K562 (cell line): ENCODE measurements at regions of chr2 and their contacts with region 1.

Region 1: GRCh38 chr2:37671009-37671815 is at the start of gene CDC42EP3:
- DNase-seq: peak; percentile 62 to 88 (median 80)
- ATAC-seq: peak; percentile 89
- H3K4me3 ChIP-seq: peak within 1 kb of the TSS; percentile 67
- H3K27ac ChIP-seq: peak within 1 kb of the TSS; percentile 33; the same call in 2 of the 3 replicates
- H3K4me1 ChIP-seq: peaks cover 13 to 22% of the 10 kb centered on the region in 2 experiments; a peak in 4 of 5 replicates
- H3K27me3 ChIP-seq: peaks cover 0 to 12% of the 10 kb centered on the region in 2 experiments; a peak in 2 of 5 replicates
- CTCF ChIP-seq: no peak
- EP300 ChIP-seq: no peak
- POLR2A ChIP-seq: no peak
- RAD21 ChIP-seq: no peak
- polyA plus RNA-seq, gene CDC42EP3: 0.74 to 0.77 TPM

Region 2: GRCh38 chr2:37656512-37657423 is 14.4 kb before region 1 on chr2:
- CTCF ChIA-PET with region 1: no interaction called
- POLR2A ChIA-PET with region 1: no interaction called
- in situ Hi-C with region 1: no loop called
- intact Hi-C with region 1: no loop called
- DNase-seq: no peak
- ATAC-seq: no peak
- H3K4me3 ChIP-seq: no peak overlapping the region
- H3K27ac ChIP-seq: no peak overlapping the region
- H3K4me1 ChIP-seq: peaks cover 0 to 18% of the 10 kb centered on the region in 2 experiments; a peak in 3 of 5 replicates
- H3K27me3 ChIP-seq: 0 out of 5 replicates have a peak, but pooled peaks cover 0 to 4% of the 10 kb centered on the region in 2 experiments
- CTCF ChIP-seq: no peak
- EP300 ChIP-seq: no peak
- POLR2A ChIP-seq: no peak
- RAD21 ChIP-seq: no peak

Region 3: GRCh38 chr2:37711308-37711731 is 40.1 kb after region 1 on chr2:
- CTCF ChIA-PET with region 1: no interaction called
- POLR2A ChIA-PET with region 1: no interaction called
- in situ Hi-C with region 1: no loop called
- intact Hi-C with region 1: loop called (anchors 1 kb)
- DNase-seq: peak in 1 of 4 experiments; percentile 18
- ATAC-seq: peak; percentile 63; the same call in 2 of the 3 replicates
- H3K4me3 ChIP-seq: no peak overlapping the region
- H3K27ac ChIP-seq: no peak overlapping the region
- H3K4me1 ChIP-seq: peaks cover 0 to 12% of the 10 kb centered on the region in 2 experiments; a peak in 1 of 5 replicates
- H3K27me3 ChIP-seq: no peaks in the 10 kb centered on the region
- CTCF ChIP-seq: no peak; a peak in 1 of 6 replicates
- EP300 ChIP-seq: no peak
- POLR2A ChIP-seq: no peak
- RAD21 ChIP-seq: no peak

Region 4: DNA sequence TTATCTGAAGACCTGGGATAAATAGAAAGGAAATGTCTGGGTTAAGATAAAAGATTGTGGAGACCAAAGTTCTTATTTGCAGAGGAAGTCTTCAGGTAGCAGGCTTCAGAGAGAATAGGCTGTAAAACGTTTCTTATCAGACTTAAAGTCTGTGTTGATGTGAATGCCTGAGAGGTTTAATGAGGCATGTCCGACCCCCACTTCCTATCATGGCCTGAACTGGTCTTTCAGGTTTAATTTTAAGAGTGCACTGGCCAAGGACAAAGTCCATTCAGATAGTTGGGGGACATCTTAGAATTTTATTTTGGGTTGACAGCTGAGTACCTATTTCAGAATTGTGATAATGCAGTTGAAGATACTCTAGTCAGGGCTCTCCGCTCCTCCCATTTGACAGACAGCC is 613.8 kb after region 1 on chr2:
- CTCF ChIA-PET with region 1: no interaction called
- POLR2A ChIA-PET with region 1: no interaction called
- in situ Hi-C with region 1: no loop called
- intact Hi-C with region 1: no loop called
- DNase-seq: no peak
- ATAC-seq: no peak
- H3K4me3 ChIP-seq: no peak overlapping the region
- H3K27ac ChIP-seq: no peak overlapping the region
- H3K4me1 ChIP-seq: no peaks in the 10 kb centered on the region; a peak in 1 of 5 replicates
- H3K27me3 ChIP-seq: peaks cover 7 to 21% of the 10 kb centered on the region in 2 experiments; a peak in 3 of 5 replicates
- CTCF ChIP-seq: no peak
- EP300 ChIP-seq: no peak
- POLR2A ChIP-seq: no peak
- RAD21 ChIP-seq: no peak